Panc1 (cell line): ENCODE measurements at regions of chr3 and their contacts with region 1.

Region 1: GRCh38 chr3:196323701-196324100 is 5.7 kb upstream of the DYNLT2B start:
- DNase-seq: no peak
- ATAC-seq: no peak
- H3K4me3 ChIP-seq: no peak overlapping the region
- H3K27ac ChIP-seq: no peak overlapping the region
- H3K4me1 ChIP-seq: no peaks in the 10 kb centered on the region; the same call in 1 of the 2 replicates
- H3K27me3 ChIP-seq: no peaks in the 10 kb centered on the region
- CTCF ChIP-seq: no peak

Region 2: GRCh38 chr3:196292291-196292923 is 31.3 kb before region 1 on chr3:
- CTCF ChIA-PET with region 1: no interaction called
- POLR2A ChIA-PET with region 1: interaction called, 11 read pairs
- in situ Hi-C with region 1: no loop called
- intact Hi-C with region 1: no loop called
- DNase-seq: no peak
- ATAC-seq: no peak
- H3K4me3 ChIP-seq: no peak overlapping the region
- H3K27ac ChIP-seq: no peak overlapping the region
- H3K4me1 ChIP-seq: no peaks in the 10 kb centered on the region
- H3K27me3 ChIP-seq: no peaks in the 10 kb centered on the region
- CTCF ChIP-seq: no peak

Region 3: DNA sequence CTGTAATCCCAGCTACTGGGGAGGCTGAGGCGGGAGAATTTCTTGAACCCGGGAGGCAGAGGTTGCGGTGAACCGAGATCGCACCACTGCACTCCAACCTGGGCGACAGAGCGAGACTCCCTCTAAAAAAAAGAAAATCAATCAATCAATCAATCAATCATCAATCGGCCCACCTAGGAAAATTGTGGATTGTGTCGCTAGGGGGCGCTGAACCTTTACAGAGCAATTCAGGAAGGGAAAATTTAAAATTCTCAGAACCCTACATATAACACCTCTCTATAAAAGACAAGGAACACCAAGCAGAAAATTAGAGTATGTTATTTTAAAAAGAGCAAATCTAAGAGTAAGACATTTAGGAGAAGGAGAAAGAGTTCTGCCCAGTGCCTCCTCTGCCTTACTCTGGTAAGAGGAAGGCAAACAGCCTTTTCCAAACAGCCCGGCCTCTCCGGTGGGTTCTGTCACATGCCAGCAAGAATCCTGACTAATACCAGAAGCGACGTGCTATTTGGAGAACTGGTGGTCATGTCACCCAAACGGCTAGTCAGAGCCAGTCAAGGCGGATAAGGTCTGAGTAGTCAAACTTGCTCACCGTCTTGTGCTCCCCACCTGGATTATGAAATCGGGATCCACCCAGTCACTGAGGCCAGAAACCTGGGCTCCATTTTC is 213.8 kb after region 1 on chr3:
- CTCF ChIA-PET with region 1: no interaction called
- POLR2A ChIA-PET with region 1: no interaction called
- in situ Hi-C with region 1: no loop called
- intact Hi-C with region 1: no loop called
- DNase-seq: no peak
- ATAC-seq: no peak
- H3K4me3 ChIP-seq: no peak overlapping the region
- H3K27ac ChIP-seq: no peak overlapping the region
- H3K4me1 ChIP-seq: no peaks in the 10 kb centered on the region
- H3K27me3 ChIP-seq: no peaks in the 10 kb centered on the region
- CTCF ChIP-seq: peak; percentile 90